Aorta (tissue), 5 donors: ENCODE measurements at regions of chr7 and their contacts with region 1.

Region 1: DNA sequence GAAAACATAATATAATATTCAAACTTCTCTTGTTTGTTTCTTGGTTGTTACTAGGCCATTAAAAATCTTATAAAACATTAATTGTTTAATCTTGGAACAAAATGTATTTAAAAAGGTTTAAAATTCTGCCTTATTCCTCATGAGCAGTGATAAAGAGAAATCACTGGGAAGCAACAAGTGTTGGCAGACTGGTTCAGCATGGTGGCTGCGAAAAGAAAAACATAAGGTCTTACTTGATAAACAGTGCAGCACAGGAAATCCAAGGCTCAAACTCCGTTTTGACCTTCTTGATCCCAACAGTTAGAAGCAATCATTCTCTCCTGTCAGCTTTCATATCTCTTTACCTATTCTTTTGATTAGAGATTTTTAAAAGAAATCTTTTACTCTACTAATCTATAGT is 530.8 kb downstream of the CNTNAP2 start:
- DNase-seq: no peak
- ATAC-seq: no peak
- H3K4me3 ChIP-seq: no peak overlapping the region
- H3K27ac ChIP-seq: no peak overlapping the region
- H3K4me1 ChIP-seq: no peaks in the 10 kb centered on the region
- H3K27me3 ChIP-seq: no peaks in the 10 kb centered on the region

Region 2: DNA sequence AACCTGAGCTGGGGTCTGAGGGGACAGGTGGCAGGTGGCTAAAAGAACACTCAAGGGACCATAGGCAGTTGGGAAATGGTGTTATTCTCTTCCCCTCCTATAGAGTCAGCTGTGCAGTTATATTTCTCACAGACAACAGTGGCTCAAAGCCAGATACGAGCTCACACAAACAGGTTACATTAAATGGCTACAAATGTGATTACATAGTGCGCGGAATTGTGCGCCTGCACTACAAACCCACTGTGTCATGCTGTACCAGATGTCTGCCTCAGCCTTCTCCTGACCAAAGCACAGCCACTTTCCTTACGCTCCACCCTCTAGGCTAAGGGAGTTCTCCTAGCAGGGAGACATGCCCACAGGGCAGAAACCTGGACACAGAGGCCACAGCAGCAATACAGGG is 143.6 kb before region 1 on chr7:
- intact Hi-C with region 1: loop called in 1 of 2 experiments (anchors 5 kb)
- DNase-seq: no peak
- ATAC-seq: no peak
- H3K4me3 ChIP-seq: no peak overlapping the region
- H3K27ac ChIP-seq: no peak overlapping the region
- H3K4me1 ChIP-seq: no peaks in the 10 kb centered on the region
- H3K27me3 ChIP-seq: no peaks in the 10 kb centered on the region